H1 (cell line): ENCODE measurements at regions of chr3 and their contacts with region 1.

Region 1: DNA sequence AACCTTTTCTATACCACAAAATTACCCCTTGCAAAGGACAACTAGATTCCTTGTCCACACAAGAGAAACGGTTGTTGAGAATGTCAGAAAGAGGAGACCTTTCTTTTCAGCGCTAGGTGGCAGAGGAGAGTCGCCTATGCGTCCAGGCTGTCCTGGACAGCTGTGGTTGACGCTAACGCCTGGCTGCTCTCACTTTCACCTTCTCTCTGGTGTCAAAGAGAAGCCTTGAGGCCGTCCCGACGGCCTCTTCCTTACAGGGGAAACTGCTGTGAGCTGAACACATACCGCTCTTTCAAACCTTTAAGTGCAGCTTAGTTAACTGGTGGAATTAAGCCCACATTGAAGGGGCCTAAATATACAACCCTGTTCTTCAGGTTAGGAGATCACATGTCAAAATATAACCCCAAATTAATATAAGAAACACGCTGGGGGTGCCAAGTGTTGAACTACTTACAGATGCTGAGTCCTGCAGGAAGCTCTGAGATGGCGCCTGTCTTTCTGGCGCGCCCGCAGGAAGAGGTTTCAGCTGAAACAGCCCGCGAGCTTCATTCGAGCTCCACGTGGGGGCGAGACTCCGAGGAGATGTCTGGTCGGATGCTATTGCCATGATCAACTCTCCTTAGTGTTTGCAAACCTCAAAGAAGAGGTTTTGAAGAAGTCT is 26.1 kb upstream of the KBTBD8 start:
- DNase-seq: peak; percentile 74 to 80
- H3K4me3 ChIP-seq: no peak overlapping the region; a peak in 1 of 8 replicates
- H3K27ac ChIP-seq: no peak overlapping the region
- H3K4me1 ChIP-seq: peaks cover 0 to 6% (median 0%) of the 10 kb centered on the region in 4 experiments; a peak in 2 of 7 replicates
- H3K27me3 ChIP-seq: peaks cover 0 to 4% (median 0%) of the 10 kb centered on the region in 4 experiments; a peak in 1 of 7 replicates
- CTCF ChIP-seq: peak; percentile 75 to 91 (median 87)
- EP300 ChIP-seq: no peak
- POLR2A ChIP-seq: no peak
- RAD21 ChIP-seq: peak; percentile 92 to 97

Region 2: DNA sequence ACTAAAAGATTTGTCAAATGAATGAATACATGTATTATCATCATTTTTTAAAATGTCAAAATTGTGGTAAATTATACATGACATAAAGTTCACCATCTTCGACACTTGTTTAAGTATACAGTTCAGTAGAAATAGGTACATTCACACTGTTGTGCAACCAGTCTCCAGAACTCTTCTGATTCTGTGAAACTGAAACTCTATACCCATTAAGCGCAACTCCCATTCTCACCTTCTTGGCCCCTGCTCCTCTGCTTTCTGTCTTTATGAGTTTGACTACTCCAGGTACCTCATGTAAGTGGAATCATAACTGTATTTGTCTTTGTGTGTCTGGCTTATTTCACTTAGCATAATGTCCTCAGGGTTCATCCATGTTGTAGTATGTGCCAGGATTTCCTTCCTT is 24.0 kb before region 1 on chr3:
- CTCF ChIA-PET with region 1: interaction called, 28 read pairs
- POLR2A ChIA-PET with region 1: no interaction called
- DNase-seq: no peak
- H3K4me3 ChIP-seq: no peak overlapping the region
- H3K27ac ChIP-seq: no peak overlapping the region
- H3K4me1 ChIP-seq: no peaks in the 10 kb centered on the region; a peak in 1 of 7 replicates
- H3K27me3 ChIP-seq: peaks cover 0 to 1% (median 0%) of the 10 kb centered on the region in 4 experiments; a peak in 2 of 7 replicates
- CTCF ChIP-seq: no peak
- EP300 ChIP-seq: no peak
- POLR2A ChIP-seq: no peak
- RAD21 ChIP-seq: no peak

Region 3: DNA sequence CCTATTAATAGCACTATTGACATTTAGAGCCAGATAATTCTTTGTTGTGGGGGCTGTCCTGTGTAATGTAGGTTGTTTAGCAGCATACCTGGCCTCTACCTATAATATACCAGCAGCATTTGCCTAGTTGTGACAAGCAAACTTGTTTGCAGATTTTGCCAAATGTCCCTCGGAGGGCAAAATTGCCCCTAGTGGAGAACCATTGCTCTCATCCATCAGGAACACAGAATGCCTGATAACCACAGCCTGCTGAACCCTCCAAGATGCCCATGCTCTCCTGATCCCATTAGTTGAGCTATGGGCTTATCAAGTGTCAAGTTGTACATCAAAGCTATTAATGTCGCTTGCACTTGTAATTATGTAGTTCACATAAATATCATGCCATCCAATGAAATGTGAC is 11.1 kb after region 1 on chr3:
- CTCF ChIA-PET with region 1: interaction called, 72 read pairs
- POLR2A ChIA-PET with region 1: interaction called, 10 read pairs
- DNase-seq: no peak
- H3K4me3 ChIP-seq: no peak overlapping the region
- H3K27ac ChIP-seq: no peak overlapping the region
- H3K4me1 ChIP-seq: peaks cover 0 to 5% (median 2%) of the 10 kb centered on the region in 4 experiments; a peak in 3 of 7 replicates
- H3K27me3 ChIP-seq: no peaks in the 10 kb centered on the region
- CTCF ChIP-seq: peak; percentile 23 to 53 (median 27)
- EP300 ChIP-seq: no peak
- POLR2A ChIP-seq: no peak
- RAD21 ChIP-seq: no peak

Region 4: GRCh38 chr3:66998113-66998903 is 26.3 kb after region 1 on chr3 and contains the start of gene KBTBD8:
- CTCF ChIA-PET with region 1: interaction called, 15 read pairs
- POLR2A ChIA-PET with region 1: no interaction called
- DNase-seq: peak; percentile 92 to 97
- H3K4me3 ChIP-seq: peak within 1 kb of the TSS; percentile 74 to 88 (median 82)
- H3K27ac ChIP-seq: no peak within 1 kb of the TSS
- H3K4me1 ChIP-seq: no peaks in the 10 kb centered on the region; a peak in 2 of 7 replicates
- H3K27me3 ChIP-seq: peaks cover 0 to 3% (median 0%) of the 10 kb centered on the region in 4 experiments; a peak in 2 of 7 replicates
- CTCF ChIP-seq: no peak
- EP300 ChIP-seq: no peak
- POLR2A ChIP-seq: peak in 1 of 2 experiments; percentile 42; a peak in 1 of 3 replicates
- RAD21 ChIP-seq: no peak
- total RNA-seq, gene KBTBD8: 23.9 and 26.0 TPM in 2 replicates

Region 5: DNA sequence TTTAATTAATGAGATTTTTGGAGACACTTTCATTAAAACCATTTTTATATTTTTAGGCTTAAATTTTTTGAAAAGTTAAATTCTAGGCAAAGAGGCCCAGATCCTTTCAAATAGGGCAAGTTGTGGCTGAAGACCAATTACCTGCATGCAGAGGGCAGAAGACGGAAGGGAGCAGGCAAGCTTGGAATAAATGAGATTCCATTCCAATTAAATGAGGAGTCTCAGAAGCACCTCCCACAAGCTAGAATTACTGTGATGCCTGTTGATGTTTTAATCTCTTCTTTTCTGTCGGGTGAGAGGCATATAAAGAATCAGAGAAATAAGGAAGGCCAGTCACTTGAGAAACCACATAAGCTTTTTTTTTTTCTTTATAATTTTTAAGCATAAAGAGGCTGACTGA is 72.9 kb after region 1 on chr3:
- CTCF ChIA-PET with region 1: interaction called, 10 read pairs
- POLR2A ChIA-PET with region 1: no interaction called
- DNase-seq: no peak
- H3K4me3 ChIP-seq: no peak overlapping the region
- H3K27ac ChIP-seq: no peak overlapping the region
- H3K4me1 ChIP-seq: no peaks in the 10 kb centered on the region
- H3K27me3 ChIP-seq: no peaks in the 10 kb centered on the region
- CTCF ChIP-seq: no peak
- EP300 ChIP-seq: no peak
- POLR2A ChIP-seq: no peak
- RAD21 ChIP-seq: no peak

Region 6: GRCh38 chr3:67357610-67358458 is 385.8 kb after region 1 on chr3:
- CTCF ChIA-PET with region 1: interaction called, 10 read pairs
- POLR2A ChIA-PET with region 1: no interaction called
- DNase-seq: peak; percentile 49 to 71
- H3K4me3 ChIP-seq: no peak overlapping the region
- H3K27ac ChIP-seq: no peak overlapping the region
- H3K4me1 ChIP-seq: peaks cover 0 to 5% (median under 1%) of the 10 kb centered on the region in 4 experiments; a peak in 3 of 7 replicates
- H3K27me3 ChIP-seq: no peaks in the 10 kb centered on the region
- CTCF ChIP-seq: peak; percentile 48 to 77 (median 56)
- EP300 ChIP-seq: no peak
- POLR2A ChIP-seq: no peak
- RAD21 ChIP-seq: peak; percentile 78 to 80

Region 7: GRCh38 chr3:67790043-67790442 is 818.0 kb after region 1 on chr3:
- CTCF ChIA-PET with region 1: interaction called, 10 read pairs
- POLR2A ChIA-PET with region 1: no interaction called
- DNase-seq: peak; percentile 53 to 90
- H3K4me3 ChIP-seq: no peak overlapping the region
- H3K27ac ChIP-seq: no peak overlapping the region
- H3K4me1 ChIP-seq: no peaks in the 10 kb centered on the region
- H3K27me3 ChIP-seq: no peaks in the 10 kb centered on the region
- CTCF ChIP-seq: peak; percentile 52 to 87 (median 86)
- EP300 ChIP-seq: no peak
- POLR2A ChIP-seq: no peak
- RAD21 ChIP-seq: peak; percentile 95